Lower leg skin (tissue), 4 donors: ENCODE measurements at regions of chr12 and their contacts with region 1.

Region 1: DNA sequence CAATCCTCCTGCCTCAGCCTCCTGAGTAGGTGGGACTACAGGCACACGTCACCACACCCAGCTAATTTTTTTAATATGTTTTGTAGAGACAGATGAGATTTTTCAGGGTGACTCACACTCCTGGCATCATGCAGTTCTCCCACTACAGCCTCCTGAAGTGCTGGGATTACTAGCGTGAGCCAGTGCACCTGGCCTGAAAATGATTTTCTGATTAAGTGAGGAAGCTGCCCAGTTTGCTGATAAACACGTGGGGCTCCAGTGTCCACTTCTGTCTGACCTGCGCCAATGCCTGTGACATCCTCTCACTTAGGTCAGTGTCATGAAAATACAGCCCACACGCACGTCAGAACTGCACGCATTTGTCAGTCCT is 37.0 kb upstream of the SFSWAP start:
- DNase-seq: peak in 1 of 2 donors; percentile 40
- H3K4me3 ChIP-seq: no peak overlapping the region
- CTCF ChIP-seq: no peak
- POLR2A ChIP-seq: no peak

Region 2: DNA sequence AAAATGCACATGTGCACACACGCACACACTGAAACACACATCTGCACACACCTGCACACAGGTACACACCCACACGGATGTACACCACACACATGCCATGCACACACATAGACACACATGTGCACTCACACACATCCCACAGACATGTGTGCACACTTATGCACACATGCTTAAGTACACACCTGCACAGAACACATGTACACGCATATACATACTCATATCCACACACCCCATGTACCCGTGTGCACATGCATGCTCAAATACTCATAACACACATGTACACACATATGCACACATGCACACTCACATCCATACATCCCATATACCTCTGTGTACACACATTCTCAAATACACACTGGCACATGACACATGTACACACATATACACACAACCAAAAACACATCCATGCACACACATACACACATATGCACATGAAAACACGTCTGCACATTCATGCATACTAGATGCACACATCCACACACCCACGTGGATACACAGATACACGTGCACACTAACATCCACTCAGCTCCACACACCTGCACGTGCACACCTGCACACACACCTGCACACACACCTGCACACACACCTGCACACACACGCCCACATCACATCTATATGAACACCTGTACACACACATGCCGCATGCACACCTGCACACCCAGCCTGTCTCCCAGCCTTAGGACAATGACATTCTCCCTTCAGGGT is 383.5 kb before region 1 on chr12:
- intact Hi-C with region 1: loop called (anchors 10 kb)
- DNase-seq: peak in 1 of 2 donors; percentile 39
- H3K4me3 ChIP-seq: no peak overlapping the region
- CTCF ChIP-seq: no peak
- POLR2A ChIP-seq: no peak